ENCODE measurements at regions of chr10 and their contacts with region 1.

Region 1: GRCh38 chr10:22316285-22317120 is at the start of gene COMMD3:
- DNase-seq: peak; percentile 95
- ATAC-seq: peak; percentile 56
- H3K4me3 ChIP-seq: peak within 1 kb of the TSS; percentile 65 to 90 (median 84)
- H3K4me3 Mint-ChIP-seq: peak within 1 kb of the TSS; percentile 97
- H3K27ac ChIP-seq: peak within 1 kb of the TSS; percentile 88 to 92
- H3K27ac Mint-ChIP-seq: peak within 1 kb of the TSS; percentile 98
- H3K4me1 ChIP-seq: peaks cover 21 to 34% of the 10 kb centered on the region in 2 donors
- H3K4me1 Mint-ChIP-seq: peaks cover 36% of the 10 kb centered on the region
- H3K27me3 ChIP-seq: no peaks in the 10 kb centered on the region
- H3K27me3 Mint-ChIP-seq: no peaks in the 10 kb centered on the region
- CTCF ChIP-seq: no peak
- total RNA-seq, gene COMMD3: 74.3 and 78.0 TPM in 2 replicates

Region 2: GRCh38 chr10:21525367-21526183 is 790.9 kb before region 1 on chr10 and contains the start of gene SKIDA1:
- CTCF ChIA-PET with region 1: no interaction called
- POLR2A ChIA-PET with region 1: interaction called, 10 read pairs
- intact Hi-C with region 1: no loop called
- DNase-seq: peak; percentile 69
- ATAC-seq: peak; percentile 65
- H3K4me3 ChIP-seq: peak within 1 kb of the TSS; percentile 60 to 73 (median 64)
- H3K4me3 Mint-ChIP-seq: peak within 1 kb of the TSS; percentile 89
- H3K27ac ChIP-seq: peak within 1 kb of the TSS; percentile 31 to 52
- H3K27ac Mint-ChIP-seq: peak within 1 kb of the TSS; percentile 91
- H3K4me1 ChIP-seq: peaks cover 24 to 37% of the 10 kb centered on the region in 2 donors
- H3K4me1 Mint-ChIP-seq: peaks cover 25% of the 10 kb centered on the region
- H3K27me3 ChIP-seq: peaks cover 0 to 52% (median 46%) of the 10 kb centered on the region in 4 experiments
- H3K27me3 Mint-ChIP-seq: peaks cover 59% of the 10 kb centered on the region
- CTCF ChIP-seq: no peak
- total RNA-seq, gene SKIDA1: 0.10 TPM in 1 of 2 replicates, not detected in the other

Region 3: GRCh38 chr10:21533467-21534279 is 782.8 kb before region 1 on chr10 and contains the start of gene MLLT10:
- CTCF ChIA-PET with region 1: interaction called, 4 read pairs
- POLR2A ChIA-PET with region 1: no interaction called
- intact Hi-C with region 1: loop called (anchors 2 kb)
- DNase-seq: peak; percentile 96
- ATAC-seq: peak; percentile 87
- H3K4me3 ChIP-seq: peak within 1 kb of the TSS; percentile 58 to 98 (median 84)
- H3K4me3 Mint-ChIP-seq: peak within 1 kb of the TSS; percentile 94
- H3K27ac ChIP-seq: peak within 1 kb of the TSS; percentile 69 to 82
- H3K27ac Mint-ChIP-seq: peak within 1 kb of the TSS; percentile 95
- H3K4me1 ChIP-seq: peaks cover 12 to 16% of the 10 kb centered on the region in 2 donors
- H3K4me1 Mint-ChIP-seq: peaks cover 17% of the 10 kb centered on the region
- H3K27me3 ChIP-seq: peaks cover 0 to 10% (median under 1%) of the 10 kb centered on the region in 4 experiments
- H3K27me3 Mint-ChIP-seq: peaks cover 7% of the 10 kb centered on the region
- CTCF ChIP-seq: no peak
- total RNA-seq, gene MLLT10: 66.5 and 70.5 TPM in 2 replicates

Region 4: GRCh38 chr10:22228943-22229801 is 87.3 kb before region 1 on chr10:
- CTCF ChIA-PET with region 1: interaction called, 34 read pairs
- POLR2A ChIA-PET with region 1: interaction called, 27 read pairs
- intact Hi-C with region 1: loop called (anchors 1 kb)
- DNase-seq: peak; percentile 96
- ATAC-seq: peak; percentile 81
- H3K4me3 ChIP-seq: peak overlapping the region; percentile 68 to 83 (median 81)
- H3K4me3 Mint-ChIP-seq: peak overlapping the region; percentile 90
- H3K27ac ChIP-seq: peak overlapping the region; percentile 66 to 77
- H3K27ac Mint-ChIP-seq: peak overlapping the region; percentile 100
- H3K4me1 ChIP-seq: no peaks in the 10 kb centered on the region
- H3K4me1 Mint-ChIP-seq: peaks cover 14% of the 10 kb centered on the region
- H3K27me3 ChIP-seq: no peaks in the 10 kb centered on the region
- H3K27me3 Mint-ChIP-seq: peaks cover 7% of the 10 kb centered on the region
- CTCF ChIP-seq: no peak

Region 5: DNA sequence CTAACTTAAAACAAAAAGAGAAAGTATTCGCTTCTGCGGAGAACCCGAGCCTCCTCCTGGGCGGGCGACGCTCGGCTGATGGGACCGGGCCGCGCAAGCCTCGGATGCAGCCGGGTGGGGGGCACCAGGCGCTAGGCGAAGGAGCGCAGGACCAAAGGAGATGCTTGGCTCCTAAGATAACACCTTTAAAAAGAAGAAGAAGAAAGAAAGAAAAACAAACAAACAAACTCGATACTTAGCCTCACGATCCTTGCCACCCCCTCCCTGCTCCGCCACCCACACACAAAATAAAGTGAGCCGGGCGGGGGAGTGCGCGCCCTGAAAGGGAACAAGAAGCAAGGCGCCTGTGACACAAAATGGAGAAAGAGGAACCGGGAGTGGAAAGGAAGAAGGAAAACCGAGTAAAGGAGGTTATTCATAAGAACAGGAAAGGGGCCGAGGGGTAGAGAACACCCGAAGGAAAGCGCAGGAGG is 64.7 kb before region 1 on chr10:
- CTCF ChIA-PET with region 1: interaction called, 25 read pairs
- POLR2A ChIA-PET with region 1: interaction called, 25 read pairs
- intact Hi-C with region 1: loop called (anchors 1 kb)
- DNase-seq: peak; percentile 90
- ATAC-seq: peak; percentile 56
- H3K4me3 ChIP-seq: peak overlapping the region; percentile 77 to 95 (median 86)
- H3K4me3 Mint-ChIP-seq: peak overlapping the region; percentile 97
- H3K27ac ChIP-seq: peak overlapping the region; percentile 95 to 97
- H3K27ac Mint-ChIP-seq: peak overlapping the region; percentile 100
- H3K4me1 ChIP-seq: peaks cover 9 to 15% of the 10 kb centered on the region in 2 donors
- H3K4me1 Mint-ChIP-seq: peaks cover 26% of the 10 kb centered on the region
- H3K27me3 ChIP-seq: no peaks in the 10 kb centered on the region
- H3K27me3 Mint-ChIP-seq: no peaks in the 10 kb centered on the region
- CTCF ChIP-seq: no peak

Region 6: GRCh38 chr10:22340362-22341189 is 24.1 kb after region 1 on chr10:
- CTCF ChIA-PET with region 1: interaction called, 9 read pairs
- POLR2A ChIA-PET with region 1: interaction called, 28 read pairs
- intact Hi-C with region 1: loop called (anchors 1 kb)
- DNase-seq: peak; percentile 92
- ATAC-seq: peak; percentile 62
- H3K4me3 ChIP-seq: peak overlapping the region; percentile 62 to 79 (median 73)
- H3K4me3 Mint-ChIP-seq: peak overlapping the region; percentile 94
- H3K27ac ChIP-seq: peak overlapping the region; percentile 70 to 81
- H3K27ac Mint-ChIP-seq: peak overlapping the region; percentile 94
- H3K4me1 ChIP-seq: peaks cover 38 to 72% of the 10 kb centered on the region in 2 donors
- H3K4me1 Mint-ChIP-seq: peaks cover 31% of the 10 kb centered on the region
- H3K27me3 ChIP-seq: peaks cover 11 to 86% (median 73%) of the 10 kb centered on the region in 4 experiments
- H3K27me3 Mint-ChIP-seq: peaks cover 58% of the 10 kb centered on the region
- CTCF ChIP-seq: no peak

Region 7: GRCh38 chr10:22606164-22606614 is 289.7 kb after region 1 on chr10:
- CTCF ChIA-PET with region 1: no interaction called
- POLR2A ChIA-PET with region 1: no interaction called
- intact Hi-C with region 1: loop called (anchors 5 kb)
- DNase-seq: peak; percentile 82
- ATAC-seq: peak; percentile 78
- H3K4me3 ChIP-seq: peak overlapping the region in 3 of 5 experiments; percentile 0 to 51 (median 18)
- H3K4me3 Mint-ChIP-seq: peak overlapping the region; percentile 70
- H3K27ac ChIP-seq: peak overlapping the region; percentile 78 to 91
- H3K27ac Mint-ChIP-seq: peak overlapping the region; percentile 88
- H3K4me1 ChIP-seq: peaks cover 84 to 88% of the 10 kb centered on the region in 2 donors
- H3K4me1 Mint-ChIP-seq: peaks cover 87% of the 10 kb centered on the region
- H3K27me3 ChIP-seq: no peaks in the 10 kb centered on the region
- H3K27me3 Mint-ChIP-seq: no peaks in the 10 kb centered on the region
- CTCF ChIP-seq: no peak

Region 8: GRCh38 chr10:22693371-22693784 is 376.9 kb after region 1 on chr10:
- CTCF ChIA-PET with region 1: no interaction called
- POLR2A ChIA-PET with region 1: no interaction called
- intact Hi-C with region 1: no loop called
- DNase-seq: no peak
- ATAC-seq: peak; percentile 57
- H3K4me3 ChIP-seq: no peak overlapping the region
- H3K4me3 Mint-ChIP-seq: peak overlapping the region; percentile 37
- H3K27ac ChIP-seq: no peak overlapping the region
- H3K27ac Mint-ChIP-seq: peak overlapping the region; percentile 72
- H3K4me1 ChIP-seq: peaks cover 31 to 33% of the 10 kb centered on the region in 2 donors
- H3K4me1 Mint-ChIP-seq: peaks cover 79% of the 10 kb centered on the region
- H3K27me3 ChIP-seq: no peaks in the 10 kb centered on the region
- H3K27me3 Mint-ChIP-seq: no peaks in the 10 kb centered on the region
- CTCF ChIP-seq: no peak

Measured in B cell (primary cell).